ENCODE measurements at regions of chr14 and their contacts with region 1.

Region 1: GRCh38 chr14:23865502-23865901 is 88.1 kb upstream of the DHRS4 start:
- DNase-seq: no peak
- ATAC-seq: no peak
- H3K4me3 ChIP-seq: no peak overlapping the region
- H3K27ac ChIP-seq: no peak overlapping the region
- H3K4me1 ChIP-seq: no peaks in the 10 kb centered on the region
- H3K27me3 ChIP-seq: no peaks in the 10 kb centered on the region; a peak in 1 of 4 replicates
- CTCF ChIP-seq: no peak
- EP300 ChIP-seq: no peak
- POLR2A ChIP-seq: no peak
- RAD21 ChIP-seq: no peak

Region 2: DNA sequence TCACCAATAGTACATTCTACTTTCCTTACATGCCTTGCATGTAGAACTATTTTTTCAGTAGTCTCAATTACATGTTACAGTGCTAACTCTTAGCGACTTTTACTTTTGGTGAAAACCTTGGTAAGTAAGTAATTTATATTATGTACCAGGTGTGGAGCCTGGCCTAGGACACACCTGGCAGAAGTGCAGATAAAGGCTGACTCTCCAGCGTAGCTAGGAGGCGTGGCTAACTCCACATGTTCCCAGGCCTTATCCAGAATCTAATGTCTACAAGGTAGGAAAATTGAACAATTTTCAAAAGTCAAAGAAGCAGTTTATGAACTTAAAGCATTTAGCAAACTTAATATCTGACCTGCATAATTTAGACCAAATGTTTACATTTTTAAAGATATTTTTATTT is 72.0 kb before region 1 on chr14:
- CTCF ChIA-PET with region 1: no interaction called
- POLR2A ChIA-PET with region 1: no interaction called
- RAD21 ChIA-PET with region 1: no interaction called
- SMC1A ChIA-PET with region 1: no interaction called
- in situ Hi-C with region 1: no loop called
- intact Hi-C with region 1: no loop called
- DNase-seq: no peak
- ATAC-seq: no peak
- H3K4me3 ChIP-seq: no peak overlapping the region
- H3K27ac ChIP-seq: no peak overlapping the region
- H3K4me1 ChIP-seq: no peaks in the 10 kb centered on the region
- H3K27me3 ChIP-seq: no peaks in the 10 kb centered on the region; a peak in 2 of 4 replicates
- CTCF ChIP-seq: no peak
- EP300 ChIP-seq: no peak
- POLR2A ChIP-seq: no peak
- RAD21 ChIP-seq: no peak

Region 3: DNA sequence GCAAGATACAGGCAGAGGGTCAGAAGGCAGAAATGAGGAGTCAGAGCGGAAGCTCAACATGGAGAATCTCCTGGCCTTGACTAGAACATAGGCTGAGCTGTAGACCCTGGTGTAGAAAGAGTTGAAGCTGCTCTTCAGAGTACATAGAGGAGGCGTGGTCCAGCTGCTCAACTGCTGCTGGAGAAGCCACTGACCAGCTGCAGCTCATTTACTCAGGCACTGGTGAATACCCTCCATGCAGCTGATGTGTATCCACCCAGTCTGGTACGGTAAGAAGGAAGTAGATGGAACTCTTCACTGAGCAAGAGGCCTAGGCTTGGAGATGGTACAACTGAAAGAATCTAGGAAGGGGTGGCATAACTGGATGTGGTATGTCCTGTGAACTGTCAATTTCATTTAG is 60.7 kb before region 1 on chr14:
- CTCF ChIA-PET with region 1: no interaction called
- POLR2A ChIA-PET with region 1: no interaction called
- RAD21 ChIA-PET with region 1: no interaction called
- SMC1A ChIA-PET with region 1: no interaction called
- in situ Hi-C with region 1: no loop called
- intact Hi-C with region 1: no loop called
- DNase-seq: no peak
- ATAC-seq: no peak
- H3K4me3 ChIP-seq: no peak overlapping the region
- H3K27ac ChIP-seq: no peak overlapping the region
- H3K4me1 ChIP-seq: no peaks in the 10 kb centered on the region
- H3K27me3 ChIP-seq: no peaks in the 10 kb centered on the region
- CTCF ChIP-seq: no peak
- EP300 ChIP-seq: no peak
- POLR2A ChIP-seq: no peak
- RAD21 ChIP-seq: no peak

Region 4: GRCh38 chr14:23816371-23816770 is 49.1 kb before region 1 on chr14:
- CTCF ChIA-PET with region 1: no interaction called
- POLR2A ChIA-PET with region 1: no interaction called
- RAD21 ChIA-PET with region 1: no interaction called
- SMC1A ChIA-PET with region 1: no interaction called
- in situ Hi-C with region 1: loop called (anchors 5 kb)
- intact Hi-C with region 1: no loop called
- DNase-seq: no peak
- ATAC-seq: no peak
- H3K4me3 ChIP-seq: no peak overlapping the region
- H3K27ac ChIP-seq: no peak overlapping the region
- H3K4me1 ChIP-seq: no peaks in the 10 kb centered on the region
- H3K27me3 ChIP-seq: no peaks in the 10 kb centered on the region
- CTCF ChIP-seq: no peak
- EP300 ChIP-seq: no peak
- POLR2A ChIP-seq: no peak
- RAD21 ChIP-seq: no peak

Region 5: DNA sequence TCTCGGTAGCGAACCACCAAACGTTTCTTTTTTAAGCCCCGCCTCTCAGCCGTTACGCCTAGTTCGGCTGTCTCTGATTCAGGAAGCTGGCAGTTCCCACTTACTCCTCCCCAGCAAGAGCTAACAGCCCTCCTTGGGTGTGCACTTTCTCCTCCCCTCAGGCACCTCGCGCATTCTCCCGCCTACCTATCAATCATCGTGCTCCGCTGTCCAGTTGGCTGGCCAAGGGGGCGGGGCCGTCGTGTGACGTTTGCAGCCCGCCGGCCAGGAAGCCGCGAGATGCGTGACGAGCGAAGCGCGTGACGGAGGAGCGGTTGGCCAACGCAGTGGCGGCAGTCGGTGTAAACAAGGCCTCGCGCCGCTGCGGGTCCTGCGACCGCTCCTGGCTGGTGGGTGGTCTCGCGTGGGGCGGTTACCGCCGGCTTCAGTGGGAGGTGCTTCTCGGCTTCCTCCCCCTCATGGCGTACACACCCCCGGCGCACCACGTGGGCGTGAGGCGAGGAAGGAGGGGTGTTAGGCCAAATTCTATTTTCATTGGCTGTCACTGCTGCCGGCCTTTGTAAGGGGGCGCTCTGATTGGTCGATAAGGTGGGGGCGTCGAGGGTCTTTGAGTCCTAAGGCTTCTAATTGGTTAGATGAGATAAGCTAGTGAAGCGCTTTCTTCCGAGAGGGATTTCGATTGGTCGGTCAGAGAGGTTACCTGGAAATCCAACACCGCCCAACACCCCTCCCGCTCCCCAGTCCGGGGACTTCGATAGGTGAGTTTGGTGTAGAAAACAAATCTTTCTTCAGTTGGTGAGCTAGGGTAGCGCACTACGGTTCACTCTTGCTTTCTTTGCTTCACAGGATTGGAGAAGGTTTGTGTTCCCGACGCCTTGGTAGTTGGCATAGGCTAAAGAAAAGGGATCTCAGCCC is 249.3 kb after region 1 on chr14 and contains the starts of genes DCAF11 and NRL:
- CTCF ChIA-PET with region 1: no interaction called
- POLR2A ChIA-PET with region 1: no interaction called
- RAD21 ChIA-PET with region 1: no interaction called
- SMC1A ChIA-PET with region 1: no interaction called
- in situ Hi-C with region 1: no loop called
- intact Hi-C with region 1: no loop called
- DNase-seq: peak; percentile 99
- ATAC-seq: peak; percentile 92
- H3K4me3 ChIP-seq: peak within 1 kb of the TSS; percentile 96
- H3K27ac ChIP-seq: peak within 1 kb of the TSS; percentile 94
- H3K4me1 ChIP-seq: peaks cover 5% of the 10 kb centered on the region
- H3K27me3 ChIP-seq: no peaks in the 10 kb centered on the region
- CTCF ChIP-seq: no peak
- EP300 ChIP-seq: no peak
- POLR2A ChIP-seq: peak; percentile 91
- RAD21 ChIP-seq: no peak
- polyA plus RNA-seq, gene DCAF11: 13.4 to 16.4 TPM
- polyA plus RNA-seq, gene NRL: 0.11 to 0.13 TPM

Region 6: DNA sequence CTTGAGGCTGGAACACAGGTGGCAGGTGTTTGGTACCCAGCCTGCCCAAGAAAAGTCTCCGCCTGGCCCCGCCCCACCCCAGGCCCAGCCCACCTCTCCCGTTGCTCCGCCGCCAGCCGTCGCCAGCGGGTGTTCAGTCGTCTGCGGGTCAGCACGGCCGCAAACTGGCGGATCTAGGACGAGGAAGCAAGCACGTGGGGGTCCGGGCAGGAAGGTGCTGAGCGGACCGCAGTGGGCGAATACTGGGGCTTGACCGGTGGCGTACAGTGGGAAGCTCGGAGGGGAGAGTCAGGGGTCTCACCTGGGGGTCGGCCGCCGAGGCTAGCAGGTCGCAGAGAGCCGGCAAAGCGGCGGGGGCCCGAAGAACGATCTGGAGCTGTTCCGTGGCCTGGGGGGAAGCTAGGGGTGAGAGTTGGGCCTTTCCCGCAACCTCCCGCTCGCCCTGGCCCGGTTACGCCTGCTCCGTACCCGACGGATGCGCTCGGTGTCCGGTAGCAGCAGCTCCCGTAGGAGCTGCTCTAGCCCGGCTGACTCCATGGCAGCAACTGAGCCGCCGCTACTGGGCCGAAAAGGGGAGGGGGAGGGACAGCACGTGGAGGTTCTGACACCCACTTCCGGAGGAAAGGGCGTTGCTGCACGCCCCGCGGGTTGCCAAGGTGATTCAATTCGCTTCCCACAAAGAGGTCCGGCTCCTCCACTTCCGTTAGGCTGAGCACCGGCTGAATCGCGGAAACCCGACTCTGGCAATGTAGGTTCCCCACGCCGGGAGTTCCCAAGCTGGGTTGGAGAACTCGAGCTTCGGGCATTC is 323.0 kb after region 1 on chr14 and contains the start of gene IPO4:
- CTCF ChIA-PET with region 1: no interaction called
- POLR2A ChIA-PET with region 1: no interaction called
- RAD21 ChIA-PET with region 1: no interaction called
- SMC1A ChIA-PET with region 1: no interaction called
- in situ Hi-C with region 1: no loop called
- intact Hi-C with region 1: no loop called
- DNase-seq: peak; percentile 88
- ATAC-seq: peak; percentile 94
- H3K4me3 ChIP-seq: peak within 1 kb of the TSS; percentile 79
- H3K27ac ChIP-seq: peak within 1 kb of the TSS; percentile 34
- H3K4me1 ChIP-seq: 0 out of 2 replicates have a peak, but pooled peaks cover 4% of the 10 kb centered on the region
- H3K27me3 ChIP-seq: no peaks in the 10 kb centered on the region
- CTCF ChIP-seq: no peak
- EP300 ChIP-seq: peak in 1 of 2 experiments; percentile 70; a peak in 2 of 4 replicates
- POLR2A ChIP-seq: peak; percentile 94
- RAD21 ChIP-seq: no peak
- polyA plus RNA-seq, gene IPO4: 7.8 to 10.3 TPM

Measured in GM12878 (cell line).